ENCODE measurements at regions of chr18 and their contacts with region 1.

Region 1: GRCh38 chr18:44679056-44679905 is 1.4 kb upstream of the SETBP1 start:
- DNase-seq: peak; percentile 85 to 88
- ATAC-seq: peak; percentile 95 to 98 (median 97)
- H3K4me3 ChIP-seq: peak overlapping the region; percentile 49 to 98 (median 85)
- H3K27ac ChIP-seq: peak overlapping the region; percentile 96 to 99 (median 98)
- H3K4me1 ChIP-seq: peaks cover 4 to 40% (median 14%) of the 10 kb centered on the region in 9 donors
- H3K27me3 ChIP-seq: peaks cover 0 to 58% (median 0%) of the 10 kb centered on the region in 7 donors
- CTCF ChIP-seq: peak; percentile 42 to 90 (median 69)

Region 2: GRCh38 chr18:44341759-44342158 is 337.5 kb before region 1 on chr18:
- intact Hi-C with region 1: no loop called
- DNase-seq: no peak
- ATAC-seq: no peak
- H3K4me3 ChIP-seq: no peak overlapping the region
- H3K27ac ChIP-seq: no peak overlapping the region
- H3K4me1 ChIP-seq: no peaks in the 10 kb centered on the region
- H3K27me3 ChIP-seq: no peaks in the 10 kb centered on the region
- CTCF ChIP-seq: no peak

Region 3: DNA sequence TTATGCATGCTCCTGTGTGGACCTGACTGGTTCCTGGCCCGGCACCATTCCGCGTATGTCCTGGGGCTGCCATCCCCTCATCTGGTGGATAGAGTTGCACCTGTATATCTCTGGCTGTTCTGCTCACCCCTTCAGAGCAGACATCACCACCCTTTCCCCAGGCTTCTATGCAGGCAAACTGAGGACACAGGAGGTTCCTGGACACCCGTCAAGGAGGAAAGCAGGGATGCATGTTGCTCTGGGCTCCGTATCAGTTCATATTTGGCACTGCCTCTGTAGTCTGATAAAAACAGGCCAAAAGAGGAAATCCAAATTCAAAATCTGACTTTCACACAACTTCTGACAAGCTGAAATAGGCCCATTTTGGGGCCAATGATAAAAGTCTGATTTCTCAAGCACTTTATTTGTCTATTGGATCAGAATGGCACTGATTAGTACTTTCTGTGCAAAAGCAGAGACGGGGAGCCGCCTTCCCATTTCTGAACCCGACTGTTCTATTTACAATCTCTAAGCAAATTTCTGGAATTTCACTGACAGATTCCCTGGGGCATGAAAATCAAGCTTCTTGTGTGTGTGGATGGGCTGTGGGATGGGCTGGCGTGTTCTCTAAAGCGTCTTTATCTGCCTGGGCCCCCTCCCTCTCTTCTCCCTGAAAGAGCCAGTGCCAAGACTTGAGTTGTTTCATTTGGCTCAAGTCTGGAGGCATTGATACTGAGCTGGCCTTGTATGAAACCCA is 98.3 kb after region 1 on chr18:
- intact Hi-C with region 1: loop called in 2 of 10 experiments (anchors 5 to 10 kb)
- DNase-seq: peak; percentile 25 to 31
- ATAC-seq: peak in 7 of 8 donors; percentile 12 to 78 (median 56)
- H3K4me3 ChIP-seq: peak overlapping the region in 1 of 10 donors; percentile 3
- H3K27ac ChIP-seq: peak overlapping the region in 5 of 10 donors; percentile 1 to 55 (median 39)
- H3K4me1 ChIP-seq: peaks cover 0 to 54% (median 19%) of the 10 kb centered on the region in 9 donors
- H3K27me3 ChIP-seq: peaks cover 0 to 3% (median 0%) of the 10 kb centered on the region in 7 donors
- CTCF ChIP-seq: no peak

Region 4: GRCh38 chr18:44826418-44827259 is 147.4 kb after region 1 on chr18:
- intact Hi-C with region 1: loop called in 1 of 10 experiments (anchors 2 kb)
- DNase-seq: peak in 1 of 2 donors; percentile 88
- ATAC-seq: peak; percentile 62 to 83 (median 74)
- H3K4me3 ChIP-seq: no peak overlapping the region
- H3K27ac ChIP-seq: peak overlapping the region; percentile 1 to 79 (median 60)
- H3K4me1 ChIP-seq: peaks cover 7 to 68% (median 27%) of the 10 kb centered on the region in 9 donors
- H3K27me3 ChIP-seq: no peaks in the 10 kb centered on the region
- CTCF ChIP-seq: no peak

Region 5: GRCh38 chr18:44961288-44961995 is 282.2 kb after region 1 on chr18:
- intact Hi-C with region 1: loop called in 2 of 10 experiments (anchors 5 to 10 kb)
- DNase-seq: no peak
- ATAC-seq: no peak
- H3K4me3 ChIP-seq: no peak overlapping the region
- H3K27ac ChIP-seq: no peak overlapping the region
- H3K4me1 ChIP-seq: peaks cover 0 to 31% (median 21%) of the 10 kb centered on the region in 9 donors
- H3K27me3 ChIP-seq: no peaks in the 10 kb centered on the region
- CTCF ChIP-seq: no peak

Region 6: DNA sequence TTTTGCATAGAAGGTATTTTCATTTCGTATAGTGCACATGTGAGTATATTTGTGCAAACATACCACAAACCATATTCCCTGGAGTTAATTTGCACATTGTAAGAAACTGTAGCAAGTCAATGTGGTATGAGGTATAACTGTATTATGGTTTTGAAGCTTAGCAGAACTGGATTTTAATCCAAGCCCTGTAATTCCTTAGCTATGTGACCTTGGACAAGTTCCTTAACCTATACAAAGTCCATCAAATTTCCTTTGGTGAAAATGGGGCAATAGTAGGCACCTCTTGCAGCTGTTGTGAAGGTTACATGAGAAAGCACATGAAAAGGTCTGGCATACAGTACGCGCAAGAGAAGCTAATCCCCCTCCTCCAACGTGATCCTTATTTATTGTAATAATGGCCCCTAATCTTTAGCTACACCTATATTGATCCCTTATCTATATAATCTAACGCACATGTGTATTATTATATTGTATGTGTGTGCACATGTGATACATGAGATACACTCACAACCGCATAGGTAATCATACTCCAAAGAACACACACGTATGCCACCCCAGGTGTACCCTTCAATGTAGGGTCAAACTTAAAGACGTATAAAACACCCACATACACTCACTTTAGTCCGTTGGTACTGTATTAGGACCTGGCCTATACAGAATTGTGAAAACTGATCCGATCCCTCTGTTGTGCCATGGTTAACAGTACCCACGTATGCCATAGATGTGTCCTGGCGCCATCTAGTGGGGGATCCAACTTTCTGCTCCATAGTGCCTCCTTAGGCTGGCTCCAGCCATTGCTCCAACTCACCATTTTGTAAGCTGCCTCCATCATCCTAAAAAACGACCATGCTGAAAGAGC is 533.1 kb after region 1 on chr18:
- intact Hi-C with region 1: loop called in 9 of 10 experiments (anchors 2 to 10 kb)
- DNase-seq: peak; percentile 66 to 87
- ATAC-seq: peak; percentile 92 to 98 (median 96)
- H3K4me3 ChIP-seq: no peak overlapping the region
- H3K27ac ChIP-seq: no peak overlapping the region
- H3K4me1 ChIP-seq: no peaks in the 10 kb centered on the region
- H3K27me3 ChIP-seq: no peaks in the 10 kb centered on the region
- CTCF ChIP-seq: peak in 8 of 9 donors; percentile 71 to 99 (median 92)

Measured in heart right ventricle (tissue), 16 donors.